Activated CD8-positive, alpha-beta T cell treated with anti-CD3 and anti-CD28 coated beads for 36 hours (primary cell): ENCODE measurements at regions of chr1 and their contacts with region 1.

Region 1: GRCh38 chr1:201361652-201362504 is 15.6 kb downstream of the TNNT2 start:
- DNase-seq: peak; percentile 51
- ATAC-seq: peak; percentile 82
- H3K4me3 Mint-ChIP-seq: no peak overlapping the region
- H3K27ac Mint-ChIP-seq: no peak overlapping the region
- H3K4me1 Mint-ChIP-seq: no peaks in the 10 kb centered on the region
- H3K27me3 Mint-ChIP-seq: peaks cover 3% of the 10 kb centered on the region
- CTCF ChIP-seq: peak; percentile 70

Region 2: GRCh38 chr1:201348211-201348566 is 13.7 kb before region 1 on chr1:
- CTCF ChIA-PET with region 1: interaction called, 25 read pairs
- POLR2A ChIA-PET with region 1: no interaction called
- intact Hi-C with region 1: no loop called
- DNase-seq: peak; percentile 56
- ATAC-seq: peak; percentile 85
- H3K4me3 Mint-ChIP-seq: no peak overlapping the region
- H3K27ac Mint-ChIP-seq: no peak overlapping the region
- H3K4me1 Mint-ChIP-seq: no peaks in the 10 kb centered on the region
- H3K27me3 Mint-ChIP-seq: peaks cover 23% of the 10 kb centered on the region
- CTCF ChIP-seq: peak; percentile 55

Region 3: GRCh38 chr1:201739492-201740085 is 377.7 kb after region 1 on chr1:
- CTCF ChIA-PET with region 1: no interaction called
- POLR2A ChIA-PET with region 1: no interaction called
- intact Hi-C with region 1: no loop called
- DNase-seq: peak; percentile 65
- ATAC-seq: peak; percentile 87
- H3K4me3 Mint-ChIP-seq: peak overlapping the region; percentile 76
- H3K27ac Mint-ChIP-seq: no peak overlapping the region
- H3K4me1 Mint-ChIP-seq: peaks cover 9% of the 10 kb centered on the region
- H3K27me3 Mint-ChIP-seq: peaks cover 22% of the 10 kb centered on the region
- CTCF ChIP-seq: no peak